HepG2 (cell line): ENCODE measurements at regions of chr2 and their contacts with region 1.

Region 1: GRCh38 chr2:44392338-44392943 is 30.7 kb downstream of the CAMKMT start:
- DNase-seq: peak; percentile 47
- ATAC-seq: no peak
- H3K4me3 ChIP-seq: no peak overlapping the region
- H3K27ac ChIP-seq: no peak overlapping the region
- H3K4me1 ChIP-seq: no peaks in the 10 kb centered on the region
- H3K27me3 ChIP-seq: no peaks in the 10 kb centered on the region
- CTCF ChIP-seq: peak; percentile 56
- EP300 ChIP-seq: no peak
- POLR2A ChIP-seq: no peak
- RAD21 ChIP-seq: no peak; the same call in 1 of the 2 replicates

Region 2: GRCh38 chr2:44479122-44479887 is 86.9 kb after region 1 on chr2:
- CTCF ChIA-PET with region 1: interaction called, 27 read pairs
- POLR2A ChIA-PET with region 1: interaction called, 3 read pairs
- in situ Hi-C with region 1: no loop called
- intact Hi-C with region 1: loop called (anchors 1 kb)
- DNase-seq: peak; percentile 89
- ATAC-seq: peak; percentile 99
- H3K4me3 ChIP-seq: no peak overlapping the region
- H3K27ac ChIP-seq: no peak overlapping the region
- H3K4me1 ChIP-seq: no peaks in the 10 kb centered on the region
- H3K27me3 ChIP-seq: no peaks in the 10 kb centered on the region
- CTCF ChIP-seq: peak; percentile 99
- EP300 ChIP-seq: no peak
- POLR2A ChIP-seq: no peak
- RAD21 ChIP-seq: peak; percentile 93

Region 3: DNA sequence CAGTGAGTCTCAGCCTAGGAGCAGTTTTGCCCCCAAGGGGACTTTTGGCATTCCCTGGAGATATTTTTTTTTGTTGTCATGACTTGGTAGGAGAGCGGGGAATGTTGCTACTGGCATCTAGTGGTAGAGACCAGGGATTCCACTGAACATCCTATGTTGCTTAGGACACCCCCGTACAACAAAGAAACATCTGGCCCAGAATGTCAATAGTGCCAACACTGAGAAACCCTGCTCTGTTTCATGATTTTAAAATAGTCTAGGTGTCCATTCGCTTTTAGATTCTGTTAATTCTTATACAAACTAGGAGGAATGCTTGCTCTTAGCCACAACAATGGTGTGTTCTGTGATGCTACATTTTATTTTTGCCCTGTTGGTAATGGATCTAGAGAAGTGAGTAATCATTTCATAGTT is 323.2 kb after region 1 on chr2:
- CTCF ChIA-PET with region 1: no interaction called
- POLR2A ChIA-PET with region 1: no interaction called
- in situ Hi-C with region 1: no loop called
- intact Hi-C with region 1: loop called (anchors 5 kb)
- DNase-seq: peak; percentile 24
- ATAC-seq: peak; percentile 93
- H3K4me3 ChIP-seq: no peak overlapping the region
- H3K27ac ChIP-seq: no peak overlapping the region
- H3K4me1 ChIP-seq: no peaks in the 10 kb centered on the region
- H3K27me3 ChIP-seq: no peaks in the 10 kb centered on the region
- CTCF ChIP-seq: peak; percentile 57
- EP300 ChIP-seq: no peak
- POLR2A ChIP-seq: no peak
- RAD21 ChIP-seq: peak; percentile 34; the same call in 1 of the 2 replicates

Region 4: DNA sequence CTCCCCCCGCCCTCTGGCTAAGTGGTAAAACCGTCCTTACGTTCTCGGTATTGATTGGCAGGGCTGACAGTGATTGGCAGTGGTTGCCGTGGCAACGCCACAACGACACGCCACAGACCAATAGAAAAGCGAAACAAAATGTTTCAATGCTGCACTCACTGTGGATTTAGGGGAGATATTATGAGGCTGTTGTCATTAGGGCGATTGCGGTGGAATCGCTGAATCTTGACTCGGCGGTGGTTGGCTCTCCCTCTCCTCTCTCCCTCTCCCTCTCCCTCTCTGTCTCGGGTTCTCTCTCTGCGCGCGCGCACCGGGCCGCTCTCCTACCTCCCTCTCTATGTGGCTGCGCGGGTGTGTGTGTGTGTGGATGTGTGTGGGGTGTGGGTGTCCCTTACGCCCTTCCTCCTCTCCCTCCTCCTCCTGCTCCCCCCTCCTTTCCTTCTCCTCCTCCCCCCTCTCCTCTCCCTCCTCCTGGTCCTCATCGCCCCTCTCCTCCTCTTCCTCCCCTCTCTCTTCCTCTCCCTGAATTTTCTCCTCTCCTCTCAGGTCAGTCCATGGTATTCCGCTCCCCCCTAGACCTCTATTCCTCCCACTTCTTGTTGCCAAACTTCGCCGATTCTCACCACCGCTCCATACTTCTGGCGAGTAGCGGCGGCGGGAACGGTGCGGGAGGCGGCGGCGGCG is 549.3 kb after region 1 on chr2 and contains the start of gene SIX3:
- CTCF ChIA-PET with region 1: no interaction called
- POLR2A ChIA-PET with region 1: no interaction called
- in situ Hi-C with region 1: loop called (anchors 10 kb)
- intact Hi-C with region 1: no loop called
- DNase-seq: no peak
- ATAC-seq: no peak
- H3K4me3 ChIP-seq: no peak within 1 kb of the TSS
- H3K27ac ChIP-seq: no peak within 1 kb of the TSS
- H3K4me1 ChIP-seq: peaks cover 20% of the 10 kb centered on the region
- H3K27me3 ChIP-seq: peaks cover 27 to 92% of the 10 kb centered on the region in 2 experiments
- CTCF ChIP-seq: no peak
- EP300 ChIP-seq: no peak
- POLR2A ChIP-seq: no peak
- RAD21 ChIP-seq: no peak
- total RNA-seq, gene SIX3: not detected in 2 replicates